A673 (cell line): ENCODE measurements at regions of chr14 and their contacts with region 1.

Region 1: DNA sequence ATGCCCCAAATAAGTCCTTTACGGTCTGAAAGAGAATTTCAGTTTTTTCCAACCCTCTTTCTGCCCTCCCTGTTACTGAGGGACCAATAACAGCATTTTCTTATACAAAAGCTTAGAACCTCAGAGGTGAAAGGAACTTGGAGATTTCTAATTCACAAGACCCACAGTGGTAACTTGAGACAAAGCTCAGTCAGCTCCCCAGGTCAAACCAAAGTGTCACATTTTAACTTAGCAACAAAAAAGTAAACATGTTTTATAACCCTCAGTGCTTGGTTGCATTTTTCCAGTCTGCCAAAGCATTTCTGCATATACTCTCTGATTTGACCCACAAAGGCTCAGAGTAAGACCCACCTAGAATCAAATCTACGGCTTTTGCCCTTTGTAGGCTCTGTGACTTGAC is 415.2 kb downstream of the VRK1 start:
- DNase-seq: no peak
- H3K4me3 ChIP-seq: no peak overlapping the region
- H3K27ac ChIP-seq: peak overlapping the region; percentile 99
- H3K4me1 ChIP-seq: peaks cover 88% of the 10 kb centered on the region
- H3K27me3 ChIP-seq: no peaks in the 10 kb centered on the region
- CTCF ChIP-seq: no peak

Region 2: DNA sequence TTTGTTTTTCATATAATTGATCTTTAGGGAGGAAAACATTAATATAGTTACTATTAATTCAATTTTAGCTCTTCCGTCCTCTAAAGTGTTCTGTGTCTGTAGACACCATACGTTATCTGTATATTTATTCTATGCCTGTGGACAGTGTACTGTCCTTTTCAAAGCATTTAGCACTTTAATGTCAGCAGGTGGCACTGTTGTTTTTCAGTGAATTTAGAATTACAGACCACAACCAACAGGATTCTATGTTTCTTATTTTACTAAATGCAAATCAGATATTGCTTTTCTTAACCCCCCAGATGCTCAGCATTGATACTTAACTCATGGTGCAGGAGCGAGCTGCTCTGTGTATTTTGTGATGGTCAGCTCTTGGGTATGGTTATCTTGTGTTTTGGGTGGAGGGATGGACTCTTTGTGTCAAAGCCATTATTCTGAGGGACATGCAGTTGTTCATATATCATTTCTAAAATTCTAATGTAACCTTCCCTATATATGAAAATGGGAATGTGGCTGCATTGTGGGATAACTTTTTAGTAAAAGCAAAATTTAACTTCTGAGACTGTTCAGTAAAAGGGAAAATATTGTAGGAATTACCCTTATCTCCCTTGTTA is 645.0 kb before region 1 on chr14:
- CTCF ChIA-PET with region 1: interaction called, 9 read pairs
- POLR2A ChIA-PET with region 1: no interaction called
- intact Hi-C with region 1: loop called (anchors 2 kb)
- DNase-seq: peak; percentile 80
- H3K4me3 ChIP-seq: no peak overlapping the region
- H3K27ac ChIP-seq: peak overlapping the region; percentile 51
- H3K4me1 ChIP-seq: peaks cover 53% of the 10 kb centered on the region
- H3K27me3 ChIP-seq: no peaks in the 10 kb centered on the region
- CTCF ChIP-seq: peak; percentile 74

Region 3: GRCh38 chr14:96894966-96895365 is 317.4 kb before region 1 on chr14:
- CTCF ChIA-PET with region 1: interaction called, 10 read pairs
- POLR2A ChIA-PET with region 1: no interaction called
- intact Hi-C with region 1: no loop called
- DNase-seq: no peak
- H3K4me3 ChIP-seq: no peak overlapping the region
- H3K27ac ChIP-seq: no peak overlapping the region
- H3K4me1 ChIP-seq: peaks cover under 1% of the 10 kb centered on the region
- H3K27me3 ChIP-seq: no peaks in the 10 kb centered on the region
- CTCF ChIP-seq: no peak

Region 4: DNA sequence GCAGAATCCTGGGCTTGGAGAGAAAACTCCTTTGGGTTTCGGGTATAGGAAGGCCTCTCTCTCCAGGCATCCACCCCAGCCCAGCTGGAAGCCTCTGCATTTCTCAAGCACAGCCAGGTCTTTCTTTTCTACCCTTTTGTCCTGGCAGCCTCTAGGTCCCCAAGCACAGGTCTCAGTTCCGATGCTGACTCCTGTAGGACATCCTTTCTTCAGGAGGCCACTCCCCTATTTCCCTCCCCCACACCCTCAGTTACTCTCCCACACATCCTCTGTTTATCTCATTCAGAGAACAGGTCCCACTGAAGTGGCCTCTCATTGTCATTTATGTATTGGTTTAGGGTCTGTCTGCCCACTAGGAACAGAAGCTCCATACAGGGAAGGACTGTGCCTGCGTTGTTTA is 62.6 kb before region 1 on chr14:
- CTCF ChIA-PET with region 1: no interaction called
- POLR2A ChIA-PET with region 1: interaction called, 13 read pairs
- intact Hi-C with region 1: loop called (anchors 1 kb)
- DNase-seq: no peak
- H3K4me3 ChIP-seq: no peak overlapping the region
- H3K27ac ChIP-seq: peak overlapping the region; percentile 35
- H3K4me1 ChIP-seq: peaks cover 9% of the 10 kb centered on the region
- H3K27me3 ChIP-seq: no peaks in the 10 kb centered on the region
- CTCF ChIP-seq: no peak

Region 5: DNA sequence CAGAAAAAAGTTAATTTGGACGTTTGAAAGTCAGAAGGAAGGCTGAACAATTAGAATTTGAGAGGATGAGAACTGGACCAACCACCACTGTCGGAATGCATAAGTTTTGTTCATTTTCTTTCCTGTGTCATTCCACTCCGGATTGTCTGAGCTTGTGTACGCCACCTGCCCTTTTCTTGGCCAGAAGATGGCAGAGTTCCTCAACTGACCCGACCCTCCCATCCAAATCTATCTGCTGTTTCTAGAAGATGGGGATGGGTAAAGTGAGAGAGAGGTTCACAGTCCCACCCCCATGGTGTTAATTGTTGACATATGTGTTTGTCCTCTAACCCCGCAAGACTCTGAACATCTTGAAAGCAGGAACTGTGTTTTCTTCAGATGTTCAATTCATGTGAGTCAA is 27.2 kb before region 1 on chr14:
- CTCF ChIA-PET with region 1: no interaction called
- POLR2A ChIA-PET with region 1: interaction called, 33 read pairs
- intact Hi-C with region 1: no loop called
- DNase-seq: peak; percentile 80
- H3K4me3 ChIP-seq: no peak overlapping the region
- H3K27ac ChIP-seq: peak overlapping the region; percentile 69
- H3K4me1 ChIP-seq: peaks cover 66% of the 10 kb centered on the region
- H3K27me3 ChIP-seq: no peaks in the 10 kb centered on the region
- CTCF ChIP-seq: peak; percentile 60

Region 6: GRCh38 chr14:97380539-97380941 is 168.1 kb after region 1 on chr14:
- CTCF ChIA-PET with region 1: no interaction called
- POLR2A ChIA-PET with region 1: no interaction called
- intact Hi-C with region 1: no loop called
- DNase-seq: no peak
- H3K4me3 ChIP-seq: no peak overlapping the region
- H3K27ac ChIP-seq: no peak overlapping the region
- H3K4me1 ChIP-seq: peaks cover 5% of the 10 kb centered on the region
- H3K27me3 ChIP-seq: no peaks in the 10 kb centered on the region
- CTCF ChIP-seq: no peak

Region 7: GRCh38 chr14:97538749-97539410 is 326.5 kb after region 1 on chr14:
- CTCF ChIA-PET with region 1: no interaction called
- POLR2A ChIA-PET with region 1: interaction called, 11 read pairs
- intact Hi-C with region 1: no loop called
- DNase-seq: no peak
- H3K4me3 ChIP-seq: no peak overlapping the region
- H3K27ac ChIP-seq: no peak overlapping the region
- H3K4me1 ChIP-seq: no peaks in the 10 kb centered on the region
- H3K27me3 ChIP-seq: no peaks in the 10 kb centered on the region
- CTCF ChIP-seq: no peak